Heart right ventricle (tissue), 16 donors: ENCODE measurements at regions of chr13 and their contacts with region 1.

Region 1: GRCh38 chr13:59391696-59392095 is 772.0 kb downstream of the DIAPH3 start:
- DNase-seq: peak in 1 of 2 donors; percentile 85
- ATAC-seq: peak; percentile 26 to 89 (median 84)
- H3K4me3 ChIP-seq: no peak overlapping the region
- H3K27ac ChIP-seq: peak overlapping the region in 6 of 10 donors; percentile 2 to 61 (median 52)
- H3K4me1 ChIP-seq: peaks cover 0 to 14% (median 5%) of the 10 kb centered on the region in 9 donors
- H3K27me3 ChIP-seq: no peaks in the 10 kb centered on the region
- CTCF ChIP-seq: peak; percentile 78 to 93 (median 90)

Region 2: DNA sequence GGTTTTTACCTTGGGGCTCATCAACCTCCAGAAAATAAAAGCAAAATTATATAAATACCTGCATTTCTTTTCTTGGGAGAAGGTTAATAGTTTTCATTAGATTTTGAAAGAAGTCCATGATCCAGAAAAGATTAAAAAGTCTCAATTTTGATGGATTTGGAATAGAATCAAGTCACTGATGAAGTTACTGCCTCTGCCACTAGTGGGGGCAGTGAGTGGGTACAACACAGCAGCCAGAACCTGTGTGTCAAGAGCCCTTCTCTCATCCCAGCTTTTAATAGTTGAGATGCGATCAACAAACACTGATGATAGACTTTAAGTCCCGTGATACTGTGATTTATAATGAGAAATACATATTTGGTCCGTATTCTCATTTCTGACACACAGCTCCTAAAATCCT is 85.3 kb after region 1 on chr13:
- intact Hi-C with region 1: loop called in 2 of 10 experiments (anchors 5 to 10 kb)
- DNase-seq: no peak
- ATAC-seq: peak in 2 of 8 donors; percentile 29 to 45
- H3K4me3 ChIP-seq: no peak overlapping the region
- H3K27ac ChIP-seq: peak overlapping the region in 6 of 10 donors; percentile 16 to 73 (median 42)
- H3K4me1 ChIP-seq: peaks cover 10 to 65% (median 31%) of the 10 kb centered on the region in 9 donors
- H3K27me3 ChIP-seq: no peaks in the 10 kb centered on the region
- CTCF ChIP-seq: peak; percentile 9 to 54 (median 34)

Region 3: DNA sequence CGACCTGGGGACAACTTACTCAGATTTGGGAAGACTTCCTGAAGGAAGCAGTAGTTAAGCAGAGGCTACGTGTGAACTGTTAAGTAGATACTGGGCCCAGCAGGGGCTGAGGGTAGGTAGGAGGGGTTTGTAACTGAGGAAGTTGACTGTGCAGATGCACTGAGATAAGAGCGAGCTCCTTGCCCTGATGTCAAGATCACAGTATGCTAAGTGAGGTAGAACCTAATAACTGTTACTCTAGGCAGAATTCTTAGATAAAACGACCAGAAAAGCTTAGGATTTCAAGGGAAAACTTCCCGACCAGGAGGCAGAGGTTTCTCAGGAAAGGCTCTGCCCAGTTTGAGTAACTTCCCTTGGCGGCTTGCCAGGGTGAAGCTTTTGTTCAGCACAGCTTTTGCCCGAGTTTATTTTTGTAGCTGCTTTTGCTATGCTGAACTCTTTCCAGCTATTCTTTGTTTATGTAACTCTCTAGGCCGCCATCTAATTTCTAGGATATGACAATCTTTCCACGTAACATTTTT is 139.9 kb after region 1 on chr13:
- intact Hi-C with region 1: loop called in 1 of 10 experiments (anchors 5 kb)
- DNase-seq: peak; percentile 81 to 92
- ATAC-seq: peak; percentile 74 to 94 (median 90)
- H3K4me3 ChIP-seq: no peak overlapping the region
- H3K27ac ChIP-seq: peak overlapping the region in 9 of 10 donors; percentile 34 to 81 (median 69)
- H3K4me1 ChIP-seq: peaks cover 0 to 51% (median 29%) of the 10 kb centered on the region in 9 donors
- H3K27me3 ChIP-seq: no peaks in the 10 kb centered on the region
- CTCF ChIP-seq: no peak

Region 4: GRCh38 chr13:59771272-59771671 is 379.6 kb after region 1 on chr13:
- intact Hi-C with region 1: loop called in 7 of 10 experiments (anchors 5 to 10 kb)
- DNase-seq: no peak
- ATAC-seq: no peak
- H3K4me3 ChIP-seq: no peak overlapping the region
- H3K27ac ChIP-seq: no peak overlapping the region
- H3K4me1 ChIP-seq: peaks cover 0 to 8% (median 0%) of the 10 kb centered on the region in 9 donors
- H3K27me3 ChIP-seq: no peaks in the 10 kb centered on the region
- CTCF ChIP-seq: peak in 8 of 9 donors; percentile 20 to 80 (median 59)

Region 5: DNA sequence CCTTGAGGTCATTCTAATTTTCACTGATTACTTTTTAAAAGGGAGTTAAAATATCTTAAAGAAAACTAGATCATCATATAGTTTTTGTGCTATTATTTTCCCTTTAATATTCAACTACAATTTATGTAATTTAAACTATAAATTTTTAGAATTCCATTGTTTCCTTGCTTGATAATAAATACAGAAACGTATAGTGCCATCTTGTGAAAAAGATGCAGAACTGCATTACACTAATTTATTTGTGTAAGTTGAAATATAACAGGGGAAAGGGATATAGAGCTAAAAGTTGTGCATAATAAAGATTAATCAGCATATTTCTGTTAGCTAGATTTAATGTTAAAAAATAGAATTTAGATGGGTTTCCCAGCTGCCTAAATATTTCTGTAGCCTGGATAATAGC is 943.8 kb after region 1 on chr13:
- intact Hi-C with region 1: loop called in 1 of 10 experiments (anchors 10 kb)
- DNase-seq: no peak
- ATAC-seq: no peak
- H3K4me3 ChIP-seq: no peak overlapping the region
- H3K27ac ChIP-seq: no peak overlapping the region
- H3K4me1 ChIP-seq: no peaks in the 10 kb centered on the region
- H3K27me3 ChIP-seq: peaks cover 0 to 5% (median 0%) of the 10 kb centered on the region in 7 donors
- CTCF ChIP-seq: peak in 8 of 9 donors; percentile 18 to 71 (median 64)